ENCODE measurements at regions of chr7 and their contacts with region 1.

Region 1: DNA sequence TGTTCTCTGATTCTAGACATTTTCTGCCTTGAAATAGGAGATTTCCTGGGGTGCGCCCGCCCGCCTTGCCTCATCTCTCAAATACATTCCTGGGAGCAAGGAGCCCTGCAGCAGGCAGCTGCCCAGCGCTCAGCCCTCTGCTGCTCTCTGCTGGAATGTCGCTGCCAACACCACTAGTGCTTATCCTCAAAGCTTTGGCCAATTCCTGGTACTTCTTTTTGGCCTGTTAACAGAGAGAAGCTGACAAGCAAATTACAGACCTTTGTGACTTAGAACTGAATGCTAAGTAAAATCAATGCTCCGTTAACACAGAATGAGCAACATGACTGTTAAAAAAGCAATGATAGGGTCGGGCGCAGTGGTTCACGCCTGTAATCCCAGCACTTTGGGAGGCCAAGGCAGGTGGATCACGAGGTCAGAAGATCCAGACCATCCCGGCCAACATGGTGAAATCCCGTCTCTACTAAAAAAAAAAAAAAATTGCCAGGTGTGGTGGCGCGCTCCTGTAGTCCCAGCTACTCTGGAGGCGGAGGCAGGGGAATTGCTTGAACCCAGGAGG is 41.9 kb upstream of the SYPL1 start:
- DNase-seq: peak; percentile 74 to 86
- H3K4me3 ChIP-seq: no peak overlapping the region
- H3K4me1 ChIP-seq: no peaks in the 10 kb centered on the region
- H3K27me3 ChIP-seq: peaks cover 8% of the 10 kb centered on the region

Region 2: GRCh38 chr7:105577251-105577650 is 576.7 kb before region 1 on chr7:
- in situ Hi-C with region 1: no loop called
- DNase-seq: no peak
- H3K4me3 ChIP-seq: no peak overlapping the region
- H3K4me1 ChIP-seq: no peaks in the 10 kb centered on the region
- H3K27me3 ChIP-seq: no peaks in the 10 kb centered on the region

Region 3: GRCh38 chr7:105652359-105652993 is 501.5 kb before region 1 on chr7:
- in situ Hi-C with region 1: loop called (anchors 25 kb)
- DNase-seq: peak; percentile 68 to 86
- H3K4me3 ChIP-seq: no peak overlapping the region
- H3K4me1 ChIP-seq: peaks cover 7% of the 10 kb centered on the region
- H3K27me3 ChIP-seq: no peaks in the 10 kb centered on the region

Region 4: DNA sequence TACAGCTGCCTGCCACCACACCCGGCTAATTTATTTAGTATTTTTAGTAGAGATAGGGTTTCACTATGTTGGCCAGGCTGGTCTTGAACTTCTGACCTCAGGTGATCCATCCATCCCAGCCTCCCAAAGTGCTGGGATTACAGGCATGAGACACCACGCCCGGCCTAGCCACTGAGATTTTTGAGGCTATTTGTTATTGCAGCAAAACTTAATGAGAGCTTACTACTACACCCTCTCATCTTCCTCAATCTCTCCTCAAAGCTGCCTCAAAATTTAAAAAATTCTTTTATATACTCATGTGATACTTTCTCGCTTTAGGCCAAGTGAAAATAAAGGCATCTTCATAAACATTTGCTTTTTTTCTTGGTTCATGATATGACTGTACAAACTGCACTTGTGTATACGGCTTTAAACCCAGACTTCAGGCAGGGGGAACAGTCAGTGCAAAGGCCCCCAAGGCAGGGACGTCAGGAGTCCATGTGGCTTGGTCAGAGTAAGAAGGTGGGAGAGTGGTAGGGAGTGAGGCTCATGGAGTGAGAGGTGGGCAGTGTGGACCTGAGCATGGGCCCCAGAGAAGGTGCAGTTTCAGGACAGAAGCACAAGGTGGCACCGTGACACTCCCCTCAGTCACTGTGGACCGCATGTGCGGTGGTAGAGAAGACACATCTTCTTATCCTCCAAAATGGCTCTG is 97.3 kb before region 1 on chr7:
- in situ Hi-C with region 1: loop called (anchors 5 kb)
- DNase-seq: peak; percentile 76 to 82
- H3K4me3 ChIP-seq: no peak overlapping the region
- H3K4me1 ChIP-seq: no peaks in the 10 kb centered on the region
- H3K27me3 ChIP-seq: peaks cover 6% of the 10 kb centered on the region; the same call in 1 of the 2 replicates

Measured in HAP-1 (cell line).